ENCODE measurements at regions of chr1 and their contacts with region 1.

Region 1: GRCh38 chr1:244319283-244320132 is 132.2 kb downstream of the ADSS2 start:
- DNase-seq: peak; percentile 39
- H3K4me3 Mint-ChIP-seq: peak overlapping the region; percentile 46
- H3K27ac Mint-ChIP-seq: peak overlapping the region; percentile 90
- H3K4me1 Mint-ChIP-seq: peaks cover 45% of the 10 kb centered on the region
- H3K27me3 Mint-ChIP-seq: no peaks in the 10 kb centered on the region

Region 2: GRCh38 chr1:243837907-243838535 is 481.5 kb before region 1 on chr1:
- intact Hi-C with region 1: loop called (anchors 5 kb)
- DNase-seq: no peak
- H3K4me3 Mint-ChIP-seq: no peak overlapping the region
- H3K27ac Mint-ChIP-seq: peak overlapping the region; percentile 27
- H3K4me1 Mint-ChIP-seq: peaks cover 22% of the 10 kb centered on the region
- H3K27me3 Mint-ChIP-seq: no peaks in the 10 kb centered on the region

Region 3: DNA sequence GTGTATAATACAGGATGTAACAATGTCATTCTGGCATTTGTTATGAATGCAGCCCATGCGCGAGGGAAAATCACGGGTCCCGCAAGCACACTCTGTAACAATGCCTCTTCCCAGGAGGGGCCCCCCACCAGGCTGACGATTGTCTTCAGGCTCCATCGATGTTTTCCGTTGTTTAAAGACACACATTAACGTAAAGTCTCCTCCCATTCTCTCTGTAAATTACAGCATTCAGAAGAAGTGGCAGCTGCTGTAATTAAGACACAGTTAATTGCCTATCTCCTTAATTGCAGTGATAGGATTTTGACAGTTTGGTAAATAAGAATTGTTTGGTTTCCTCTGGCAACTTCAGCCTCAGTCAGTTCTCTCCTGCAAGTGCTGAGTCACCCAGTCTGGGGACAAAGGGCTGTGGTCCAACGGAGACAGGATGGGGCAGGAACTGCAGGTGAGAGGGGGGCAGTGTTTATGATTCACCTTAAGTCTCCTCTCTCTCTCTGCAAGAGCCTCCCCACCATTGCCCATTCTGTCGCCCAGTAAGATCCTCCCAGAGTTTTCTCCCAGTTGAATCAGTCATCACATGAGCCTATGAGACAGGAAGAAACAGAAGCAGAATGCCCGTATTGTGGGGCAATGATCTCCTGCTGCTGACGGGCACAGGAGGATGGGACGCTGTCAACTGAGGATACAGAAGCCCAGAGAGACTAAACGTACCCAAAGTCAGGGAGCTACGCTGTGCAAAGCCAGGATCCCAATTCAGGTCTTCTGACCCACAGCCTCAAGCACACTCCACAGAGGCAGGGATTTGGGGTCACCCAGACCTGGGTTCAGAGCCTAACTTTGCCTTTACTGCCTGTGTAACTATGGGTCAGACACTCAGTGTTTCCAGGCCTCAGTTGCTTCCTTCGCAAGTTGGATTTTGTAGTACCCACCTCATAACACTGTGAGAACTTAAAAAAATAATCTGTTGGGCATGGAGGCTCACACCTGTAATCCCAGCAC is 22.2 kb after region 1 on chr1:
- intact Hi-C with region 1: loop called (anchors 2 kb)
- DNase-seq: no peak
- H3K4me3 Mint-ChIP-seq: peak overlapping the region; percentile 46
- H3K27ac Mint-ChIP-seq: peak overlapping the region; percentile 74
- H3K4me1 Mint-ChIP-seq: peaks cover 19% of the 10 kb centered on the region
- H3K27me3 Mint-ChIP-seq: no peaks in the 10 kb centered on the region

Region 4: GRCh38 chr1:244435562-244436205 is 116.2 kb after region 1 on chr1:
- intact Hi-C with region 1: loop called (anchors 1 kb)
- DNase-seq: no peak
- H3K4me3 Mint-ChIP-seq: peak overlapping the region; percentile 26
- H3K27ac Mint-ChIP-seq: peak overlapping the region; percentile 93
- H3K4me1 Mint-ChIP-seq: peaks cover 31% of the 10 kb centered on the region
- H3K27me3 Mint-ChIP-seq: no peaks in the 10 kb centered on the region

Region 5: DNA sequence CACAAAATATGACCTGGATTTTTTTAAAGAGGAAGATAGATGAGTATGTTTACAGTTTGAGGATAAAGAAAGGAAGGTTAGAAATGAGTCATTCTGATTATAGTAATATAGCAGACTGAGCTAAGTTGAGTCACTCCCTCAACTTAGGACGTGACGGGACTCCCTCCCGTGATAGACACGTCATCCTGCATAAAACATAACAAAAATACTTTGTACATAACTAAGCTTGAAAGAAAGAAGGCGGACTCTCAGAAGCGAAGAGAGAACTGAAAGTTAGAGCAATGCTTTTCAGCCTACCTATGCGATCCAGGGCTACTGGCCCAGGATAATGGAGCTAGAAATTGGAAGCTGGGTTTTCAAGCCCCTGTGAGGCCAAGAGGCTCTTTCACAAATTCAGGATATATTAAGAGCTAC is 280.4 kb after region 1 on chr1:
- intact Hi-C with region 1: loop called (anchors 2 kb)
- DNase-seq: peak; percentile 49
- H3K4me3 Mint-ChIP-seq: peak overlapping the region; percentile 70
- H3K27ac Mint-ChIP-seq: peak overlapping the region; percentile 90
- H3K4me1 Mint-ChIP-seq: peaks cover 18% of the 10 kb centered on the region
- H3K27me3 Mint-ChIP-seq: peaks cover 4% of the 10 kb centered on the region